Activated CD8-positive, alpha-beta T cell treated with anti-CD3 and anti-CD28 coated beads for 36 hours (primary cell): ENCODE measurements at regions of chr19 and their contacts with region 1.

Region 1: GRCh38 chr19:48391107-48391986 is at the start of gene KDELR1:
- DNase-seq: peak; percentile 74
- ATAC-seq: peak; percentile 87
- H3K4me3 Mint-ChIP-seq: peak within 1 kb of the TSS; percentile 91
- H3K27ac Mint-ChIP-seq: peak within 1 kb of the TSS; percentile 92
- H3K4me1 Mint-ChIP-seq: peaks cover 26% of the 10 kb centered on the region
- H3K27me3 Mint-ChIP-seq: peaks cover 26% of the 10 kb centered on the region
- CTCF ChIP-seq: peak; percentile 85
- total RNA-seq, gene KDELR1: 66.3 to 66.7 TPM

Region 2: GRCh38 chr19:48194041-48194871 is 197.1 kb before region 1 on chr19:
- CTCF ChIA-PET with region 1: no interaction called
- POLR2A ChIA-PET with region 1: no interaction called
- intact Hi-C with region 1: no loop called
- DNase-seq: peak; percentile 62
- ATAC-seq: no peak
- H3K4me3 Mint-ChIP-seq: no peak overlapping the region
- H3K27ac Mint-ChIP-seq: no peak overlapping the region
- H3K4me1 Mint-ChIP-seq: peaks cover 11% of the 10 kb centered on the region
- H3K27me3 Mint-ChIP-seq: no peaks in the 10 kb centered on the region
- CTCF ChIP-seq: peak; percentile 70

Region 3: GRCh38 chr19:48296963-48297734 is 94.2 kb before region 1 on chr19:
- CTCF ChIA-PET with region 1: no interaction called
- POLR2A ChIA-PET with region 1: no interaction called
- intact Hi-C with region 1: no loop called
- DNase-seq: no peak
- ATAC-seq: no peak
- H3K4me3 Mint-ChIP-seq: no peak overlapping the region
- H3K27ac Mint-ChIP-seq: no peak overlapping the region
- H3K4me1 Mint-ChIP-seq: no peaks in the 10 kb centered on the region
- H3K27me3 Mint-ChIP-seq: no peaks in the 10 kb centered on the region
- CTCF ChIP-seq: no peak

Region 4: GRCh38 chr19:48333467-48334384 is 57.6 kb before region 1 on chr19:
- CTCF ChIA-PET with region 1: interaction called, 16 read pairs
- POLR2A ChIA-PET with region 1: interaction called, 5 read pairs
- intact Hi-C with region 1: no loop called
- DNase-seq: peak; percentile 96
- ATAC-seq: peak; percentile 71
- H3K4me3 Mint-ChIP-seq: peak overlapping the region; percentile 87
- H3K27ac Mint-ChIP-seq: peak overlapping the region; percentile 96
- H3K4me1 Mint-ChIP-seq: peaks cover 50% of the 10 kb centered on the region
- H3K27me3 Mint-ChIP-seq: no peaks in the 10 kb centered on the region
- CTCF ChIP-seq: peak; percentile 74

Region 5: GRCh38 chr19:48363810-48364563 is 27.4 kb before region 1 on chr19 and contains the starts of genes SYNGR4 and TMEM143:
- CTCF ChIA-PET with region 1: interaction called, 25 read pairs
- POLR2A ChIA-PET with region 1: interaction called, 7 read pairs
- intact Hi-C with region 1: no loop called
- DNase-seq: peak; percentile 97
- ATAC-seq: peak; percentile 91
- H3K4me3 Mint-ChIP-seq: peak within 1 kb of the TSS; percentile 86
- H3K27ac Mint-ChIP-seq: peak within 1 kb of the TSS; percentile 96
- H3K4me1 Mint-ChIP-seq: peaks cover 10% of the 10 kb centered on the region
- H3K27me3 Mint-ChIP-seq: no peaks in the 10 kb centered on the region
- CTCF ChIP-seq: no peak
- total RNA-seq, gene SYNGR4: 0.38 TPM in 1 of 2 experiments, not detected in the other
- total RNA-seq, gene TMEM143: 19.4 to 21.7 TPM

Region 6: GRCh38 chr19:48403606-48404005 is 12.3 kb after region 1 on chr19:
- CTCF ChIA-PET with region 1: interaction called, 22 read pairs
- POLR2A ChIA-PET with region 1: interaction called, 3 read pairs
- intact Hi-C with region 1: no loop called
- DNase-seq: peak; percentile 78
- ATAC-seq: peak; percentile 75
- H3K4me3 Mint-ChIP-seq: no peak overlapping the region
- H3K27ac Mint-ChIP-seq: peak overlapping the region; percentile 62
- H3K4me1 Mint-ChIP-seq: peaks cover 19% of the 10 kb centered on the region
- H3K27me3 Mint-ChIP-seq: peaks cover 4% of the 10 kb centered on the region
- CTCF ChIP-seq: no peak

Region 7: GRCh38 chr19:48415395-48415794 is 24.0 kb after region 1 on chr19:
- CTCF ChIA-PET with region 1: interaction called, 10 read pairs
- POLR2A ChIA-PET with region 1: interaction called, 5 read pairs
- intact Hi-C with region 1: no loop called
- DNase-seq: peak; percentile 85
- ATAC-seq: peak; percentile 73
- H3K4me3 Mint-ChIP-seq: no peak overlapping the region
- H3K27ac Mint-ChIP-seq: no peak overlapping the region
- H3K4me1 Mint-ChIP-seq: peaks cover 24% of the 10 kb centered on the region
- H3K27me3 Mint-ChIP-seq: peaks cover 15% of the 10 kb centered on the region
- CTCF ChIP-seq: no peak